Pancreas (tissue), 10 donors: ENCODE measurements at regions of chr19 and their contacts with region 1.

Region 1: DNA sequence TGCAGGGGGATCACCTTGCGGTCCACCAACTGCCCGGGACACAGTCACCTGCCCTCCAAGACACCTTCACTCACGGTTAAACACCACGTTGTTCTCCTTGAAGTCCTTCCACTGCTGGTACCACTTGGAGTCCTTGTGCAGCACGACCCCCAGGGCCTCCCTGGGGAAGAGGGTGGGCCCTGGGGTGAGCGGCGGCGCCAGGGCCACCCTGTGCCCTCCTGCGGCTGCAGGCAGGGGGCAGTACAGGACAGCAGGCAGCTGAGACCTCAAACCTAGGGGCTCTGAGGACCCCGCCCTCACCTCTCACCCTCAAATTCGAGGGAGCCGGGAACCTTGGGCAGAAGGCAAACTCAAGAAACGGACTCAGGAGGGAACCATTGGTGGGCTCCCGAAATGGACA is 7.5 kb upstream of the CTXN1 start:
- DNase-seq: no peak
- ATAC-seq: no peak
- H3K4me3 ChIP-seq: no peak overlapping the region
- H3K27ac ChIP-seq: no peak overlapping the region
- H3K4me1 ChIP-seq: no peaks in the 10 kb centered on the region
- H3K27me3 ChIP-seq: no peaks in the 10 kb centered on the region
- CTCF ChIP-seq: no peak

Region 2: GRCh38 chr19:7734220-7735203 is 198.9 kb before region 1 on chr19:
- intact Hi-C with region 1: loop called in 1 of 3 experiments (anchors 5 kb)
- DNase-seq: no peak
- ATAC-seq: peak in 2 of 4 donors; percentile 57 to 66
- H3K4me3 ChIP-seq: no peak overlapping the region
- H3K27ac ChIP-seq: no peak overlapping the region
- H3K4me1 ChIP-seq: no peaks in the 10 kb centered on the region
- H3K27me3 ChIP-seq: peaks cover 0 to 9% (median 2%) of the 10 kb centered on the region in 4 donors
- CTCF ChIP-seq: no peak

Region 3: GRCh38 chr19:7762719-7763293 is 170.6 kb before region 1 on chr19 and contains the start of gene CLEC4M:
- intact Hi-C with region 1: no loop called
- DNase-seq: no peak
- ATAC-seq: no peak
- H3K4me3 ChIP-seq: no peak within 1 kb of the TSS
- H3K27ac ChIP-seq: no peak within 1 kb of the TSS
- H3K4me1 ChIP-seq: no peaks in the 10 kb centered on the region
- H3K27me3 ChIP-seq: no peaks in the 10 kb centered on the region
- CTCF ChIP-seq: no peak
- total RNA-seq, gene CLEC4M: not detected

Region 4: GRCh38 chr19:7868676-7869452 is 64.5 kb before region 1 on chr19:
- intact Hi-C with region 1: no loop called
- DNase-seq: peak; percentile 84 to 94 (median 91)
- ATAC-seq: peak; percentile 66 to 81 (median 78)
- H3K4me3 ChIP-seq: peak overlapping the region; percentile 29 to 57 (median 35)
- H3K27ac ChIP-seq: peak overlapping the region; percentile 71 to 95 (median 88)
- H3K4me1 ChIP-seq: no peaks in the 10 kb centered on the region
- H3K27me3 ChIP-seq: no peaks in the 10 kb centered on the region
- CTCF ChIP-seq: peak; percentile 86 to 91 (median 89)